Activated CD4-positive, alpha-beta T cell treated with anti-CD3 and anti-CD28 coated beads for 36 hours (primary cell): ENCODE measurements at regions of chr17 and their contacts with region 1.

Region 1: DNA sequence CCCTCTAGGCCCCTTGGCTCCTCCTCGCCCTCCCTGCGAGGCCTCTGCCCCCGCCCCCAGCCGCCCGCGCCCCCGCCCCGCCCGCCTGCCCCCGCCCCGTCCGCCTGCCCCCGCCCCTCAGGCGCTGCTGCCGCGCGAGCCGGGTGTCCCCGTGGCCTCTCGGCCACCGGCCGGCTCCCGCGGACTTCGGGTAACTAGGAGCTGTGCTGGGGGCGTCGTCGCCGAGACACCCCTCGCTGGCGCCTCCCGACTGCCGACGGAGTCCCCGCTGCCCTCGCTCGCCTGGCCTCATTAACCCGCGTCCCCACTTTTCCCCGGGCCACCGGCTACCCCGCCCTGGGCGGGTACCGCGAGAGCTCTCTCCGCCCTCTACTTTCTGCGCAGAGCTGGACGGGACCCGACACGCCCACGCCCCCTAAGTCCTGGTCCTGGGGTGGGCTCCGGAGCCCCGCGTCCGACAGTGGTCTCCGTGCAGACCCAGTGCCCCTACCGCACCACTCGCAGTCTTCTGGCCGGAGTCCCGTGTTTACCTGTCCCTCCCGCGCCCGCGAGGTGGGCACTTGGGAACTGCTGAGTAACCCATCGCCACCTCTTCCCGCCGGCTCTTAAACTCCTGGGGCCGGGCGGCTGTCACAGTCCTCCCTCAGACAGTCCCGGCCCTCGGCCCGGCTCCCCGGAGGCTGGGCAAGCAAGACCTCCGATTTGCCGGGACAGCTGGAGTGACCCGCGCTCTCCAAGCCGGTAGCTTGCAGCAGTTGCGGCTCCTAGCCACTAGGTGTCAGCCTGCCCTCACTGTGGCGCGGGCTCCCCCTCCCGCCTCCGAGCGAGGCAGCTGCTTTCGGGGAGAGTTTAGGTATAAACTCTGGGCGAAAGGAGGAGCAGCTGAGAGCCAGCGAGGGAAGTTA is at the start of gene TLCD1:
- DNase-seq: peak; percentile 97
- ATAC-seq: peak; percentile 35
- H3K4me3 Mint-ChIP-seq: peak within 1 kb of the TSS; percentile 99
- H3K27ac Mint-ChIP-seq: peak within 1 kb of the TSS; percentile 99
- H3K4me1 Mint-ChIP-seq: peaks cover 52% of the 10 kb centered on the region
- H3K27me3 Mint-ChIP-seq: no peaks in the 10 kb centered on the region
- total RNA-seq, gene TLCD1: 8.5 to 8.7 TPM

Region 2: GRCh38 chr17:28743225-28744103 is 17.0 kb after region 1 on chr17 and contains the start of gene TRAF4:
- CTCF ChIA-PET with region 1: interaction called, 294 read pairs
- POLR2A ChIA-PET with region 1: interaction called, 111 read pairs
- intact Hi-C with region 1: loop called (anchors 1 kb)
- DNase-seq: peak; percentile 89
- ATAC-seq: peak; percentile 91
- H3K4me3 Mint-ChIP-seq: peak within 1 kb of the TSS; percentile 87
- H3K27ac Mint-ChIP-seq: peak within 1 kb of the TSS; percentile 92
- H3K4me1 Mint-ChIP-seq: peaks cover 42% of the 10 kb centered on the region
- H3K27me3 Mint-ChIP-seq: no peaks in the 10 kb centered on the region
- total RNA-seq, gene TRAF4: 96.5 to 117 TPM

Region 3: DNA sequence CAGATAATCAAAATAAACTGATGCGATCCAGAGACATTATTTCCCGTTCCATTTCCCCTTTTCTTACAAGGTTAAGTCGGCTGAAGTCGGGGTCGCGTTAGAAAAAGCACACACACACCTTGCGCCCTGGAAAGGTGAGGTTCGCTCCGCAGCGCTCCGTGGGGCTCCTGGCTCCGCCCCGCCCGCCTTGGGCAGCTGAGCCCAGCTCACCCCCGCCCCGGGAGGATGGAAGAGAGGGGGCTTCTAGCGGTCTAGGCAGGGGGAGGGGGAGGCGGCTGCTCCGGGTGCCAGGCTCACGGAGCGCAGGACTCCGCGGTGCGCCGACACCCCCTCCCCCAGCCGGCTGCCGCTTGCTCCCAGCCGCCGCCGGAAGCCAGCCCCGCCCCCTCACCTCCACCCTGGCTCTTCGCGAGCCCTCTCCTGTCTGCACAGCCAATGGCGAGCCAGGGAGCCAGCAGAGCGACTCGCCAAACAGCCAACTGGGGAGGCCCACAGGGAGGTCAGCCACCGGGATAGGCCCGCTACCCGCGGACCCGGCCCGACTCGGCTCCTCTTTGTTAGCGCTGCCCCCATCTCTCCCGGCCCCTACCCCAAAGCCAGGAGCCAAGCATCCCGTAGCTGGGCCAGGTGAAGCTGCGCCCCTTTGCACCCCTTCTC is 85.7 kb after region 1 on chr17:
- CTCF ChIA-PET with region 1: interaction called, 7 read pairs
- POLR2A ChIA-PET with region 1: no interaction called
- intact Hi-C with region 1: loop called in 1 of 2 experiments (anchors 1 kb)
- DNase-seq: peak; percentile 99
- ATAC-seq: peak; percentile 99
- H3K4me3 Mint-ChIP-seq: peak overlapping the region; percentile 82
- H3K27ac Mint-ChIP-seq: peak overlapping the region; percentile 91
- H3K4me1 Mint-ChIP-seq: peaks cover 44% of the 10 kb centered on the region
- H3K27me3 Mint-ChIP-seq: no peaks in the 10 kb centered on the region

Region 4: GRCh38 chr17:28896884-28897768 is 170.6 kb after region 1 on chr17 and contains the start of gene FLOT2:
- CTCF ChIA-PET with region 1: interaction called, 12 read pairs
- POLR2A ChIA-PET with region 1: interaction called, 5 read pairs
- intact Hi-C with region 1: no loop called
- DNase-seq: peak; percentile 84
- ATAC-seq: peak; percentile 59
- H3K4me3 Mint-ChIP-seq: peak within 1 kb of the TSS; percentile 93
- H3K27ac Mint-ChIP-seq: peak within 1 kb of the TSS; percentile 93
- H3K4me1 Mint-ChIP-seq: peaks cover 73% of the 10 kb centered on the region
- H3K27me3 Mint-ChIP-seq: no peaks in the 10 kb centered on the region
- total RNA-seq, gene FLOT2: 81.3 to 88.4 TPM

Region 5: GRCh38 chr17:28925912-28926365 is 199.5 kb after region 1 on chr17:
- CTCF ChIA-PET with region 1: interaction called, 11 read pairs
- POLR2A ChIA-PET with region 1: interaction called, 11 read pairs
- intact Hi-C with region 1: no loop called
- DNase-seq: peak; percentile 51
- ATAC-seq: peak; percentile 84
- H3K4me3 Mint-ChIP-seq: peak overlapping the region; percentile 36
- H3K27ac Mint-ChIP-seq: peak overlapping the region; percentile 88
- H3K4me1 Mint-ChIP-seq: peaks cover 59% of the 10 kb centered on the region
- H3K27me3 Mint-ChIP-seq: no peaks in the 10 kb centered on the region

Region 6: DNA sequence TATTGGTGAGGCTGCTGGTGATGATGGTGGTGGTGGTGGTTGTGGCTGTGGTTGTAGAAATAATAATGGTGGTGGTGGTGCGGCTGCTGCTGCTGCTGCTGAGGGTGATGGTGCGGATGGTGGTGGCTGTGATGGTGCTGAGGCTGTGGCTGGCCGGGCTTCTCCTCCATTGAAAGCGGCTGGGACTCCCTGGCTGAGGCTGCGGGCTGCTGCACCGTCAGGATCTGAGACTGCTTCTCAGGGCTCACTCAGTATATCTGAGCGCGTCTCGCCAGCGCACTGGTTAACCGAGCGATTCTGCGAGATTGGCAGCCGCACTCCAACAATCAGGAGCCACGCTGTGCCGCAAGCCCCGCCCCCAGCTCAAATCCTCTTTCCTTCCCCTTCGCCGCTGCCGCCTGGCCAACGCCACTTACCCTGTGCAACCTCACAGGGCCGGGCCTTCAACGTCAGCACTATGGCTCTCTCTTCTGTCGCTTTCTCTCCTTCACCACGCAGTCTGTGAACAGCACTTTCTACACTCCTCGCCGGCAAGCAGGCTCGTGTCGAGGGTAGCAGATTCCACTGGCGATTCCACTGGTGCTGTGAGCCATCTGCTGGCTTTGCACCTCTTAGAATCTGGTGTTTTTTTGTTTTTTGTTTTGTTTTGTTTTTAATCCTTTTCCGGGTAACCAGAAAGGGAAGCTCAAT is 567.6 kb after region 1 on chr17 and contains the start of gene NUFIP2:
- CTCF ChIA-PET with region 1: no interaction called
- POLR2A ChIA-PET with region 1: no interaction called
- intact Hi-C with region 1: loop called in 1 of 2 experiments (anchors 5 kb)
- DNase-seq: peak; percentile 99
- ATAC-seq: peak; percentile 93
- H3K4me3 Mint-ChIP-seq: peak within 1 kb of the TSS; percentile 100
- H3K27ac Mint-ChIP-seq: peak within 1 kb of the TSS; percentile 99
- H3K4me1 Mint-ChIP-seq: peaks cover 27% of the 10 kb centered on the region
- H3K27me3 Mint-ChIP-seq: no peaks in the 10 kb centered on the region
- total RNA-seq, gene NUFIP2: 55.1 to 93.1 TPM